Posterior cingulate gyrus (tissue), 11 donors: ENCODE measurements at regions of chr13 and their contacts with region 1.

Region 1: GRCh38 chr13:24020375-24020830 is 123.1 kb upstream of the C1QTNF9B start:
- DNase-seq: peak in 7 of 10 donors; percentile 50 to 91 (median 64)

Region 2: DNA sequence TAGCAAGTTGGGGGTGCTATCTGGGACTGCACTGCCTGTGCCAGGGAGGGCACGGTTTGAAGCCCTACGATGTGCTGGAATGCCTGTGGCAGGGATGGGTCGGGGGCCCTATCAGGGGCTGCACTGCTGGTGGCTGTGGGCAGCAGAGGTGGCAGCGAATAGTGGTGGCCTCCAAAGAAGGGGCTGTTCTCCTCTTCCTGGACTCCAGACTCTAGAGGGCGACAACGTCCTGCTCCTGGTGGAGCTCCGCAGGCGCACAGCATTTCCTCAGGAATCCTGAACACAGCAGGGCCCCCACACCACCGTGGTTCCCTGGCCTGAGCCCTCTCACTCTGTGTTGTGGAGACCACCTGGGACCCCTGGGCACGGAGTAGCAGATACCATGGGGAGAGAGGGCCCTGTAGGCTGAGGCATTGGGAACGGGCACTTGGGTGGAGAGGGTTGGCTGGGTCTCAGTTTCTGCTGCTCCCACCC is 304.6 kb before region 1 on chr13:
- intact Hi-C with region 1: no loop called
- DNase-seq: peak in 2 of 10 donors; percentile 32 to 79

Region 3: GRCh38 chr13:24228852-24229458 is 208.6 kb after region 1 on chr13:
- intact Hi-C with region 1: loop called (anchors 2 kb)
- DNase-seq: peak in 2 of 10 donors; percentile 38 to 63

Region 4: DNA sequence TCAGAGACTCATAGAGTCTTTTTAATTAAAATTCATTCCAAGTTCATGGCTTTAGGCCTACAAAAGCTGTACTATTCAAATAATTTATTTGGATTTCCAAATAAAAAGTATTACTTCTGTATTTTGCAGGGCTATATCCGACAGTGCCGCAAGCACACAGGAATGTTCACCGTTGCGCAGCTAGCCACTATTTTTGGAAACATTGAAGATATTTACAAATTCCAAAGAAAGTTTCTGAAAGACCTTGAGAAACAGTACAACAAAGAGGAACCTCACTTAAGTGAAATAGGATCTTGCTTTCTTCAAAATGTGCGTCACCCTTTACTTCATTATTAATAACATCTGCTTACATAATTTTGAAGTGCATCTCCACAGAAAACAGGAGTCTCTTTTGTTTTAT is 268.5 kb after region 1 on chr13:
- intact Hi-C with region 1: no loop called
- DNase-seq: no peak